ENCODE measurements at regions of chr11 and their contacts with region 1.

Region 1: DNA sequence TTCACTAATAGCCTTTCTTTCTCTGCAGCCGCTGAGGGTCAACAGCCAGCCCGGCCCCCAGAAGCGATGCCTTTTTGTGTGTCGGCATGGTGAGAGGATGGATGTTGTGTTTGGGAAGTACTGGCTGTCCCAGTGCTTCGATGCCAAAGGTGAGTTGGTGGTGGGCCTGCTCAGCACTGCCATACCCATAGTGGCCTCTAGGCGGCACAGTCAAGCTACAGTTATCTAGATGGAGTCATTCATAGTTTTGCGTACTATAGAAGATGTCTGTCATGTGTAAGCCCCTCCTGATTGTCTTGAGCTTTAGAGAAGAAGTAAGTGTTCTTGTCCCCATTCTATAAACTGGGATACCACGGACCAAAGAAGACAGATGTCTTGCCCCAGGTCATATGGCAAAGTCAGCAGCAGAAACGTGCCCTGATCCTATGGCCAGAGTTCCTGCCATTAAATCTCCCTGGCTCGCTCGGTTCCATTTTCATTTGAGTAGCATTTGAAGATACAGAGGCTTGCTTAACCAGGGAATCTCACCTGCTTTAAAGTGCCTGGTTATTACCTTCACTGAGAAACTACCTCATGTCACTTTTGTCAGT is 42.1 kb upstream of the CRTAM start:
- DNase-seq: peak; percentile 73

Region 2: DNA sequence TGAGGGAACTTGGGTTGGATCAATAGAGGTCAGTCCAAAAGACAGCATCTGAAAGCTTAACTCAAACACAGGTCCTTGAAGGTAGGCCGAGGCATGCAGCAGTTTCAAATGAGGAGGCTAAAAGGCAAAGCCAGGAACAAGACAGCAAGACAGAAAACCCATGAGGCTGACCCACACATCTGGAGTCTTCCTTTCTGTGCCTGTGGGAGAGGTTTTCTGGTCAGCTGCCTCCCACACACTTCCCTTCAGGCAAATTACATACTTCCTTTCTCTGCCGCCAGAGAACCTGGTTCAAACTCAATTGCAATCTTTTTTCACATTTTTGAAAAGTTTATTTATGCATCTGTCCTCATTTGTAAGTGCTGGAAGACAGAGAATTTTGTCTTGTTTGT is 12.3 kb after region 1 on chr11:
- CTCF ChIA-PET with region 1: interaction called, 11 read pairs
- POLR2A ChIA-PET with region 1: no interaction called
- DNase-seq: no peak

Region 3: GRCh38 chr11:122853971-122854446 is 57.8 kb after region 1 on chr11:
- CTCF ChIA-PET with region 1: interaction called, 22 read pairs
- POLR2A ChIA-PET with region 1: no interaction called
- DNase-seq: peak; percentile 76